Ascending aorta (tissue), 2 donors: ENCODE measurements at regions of chr5 and their contacts with region 1.

Region 1: DNA sequence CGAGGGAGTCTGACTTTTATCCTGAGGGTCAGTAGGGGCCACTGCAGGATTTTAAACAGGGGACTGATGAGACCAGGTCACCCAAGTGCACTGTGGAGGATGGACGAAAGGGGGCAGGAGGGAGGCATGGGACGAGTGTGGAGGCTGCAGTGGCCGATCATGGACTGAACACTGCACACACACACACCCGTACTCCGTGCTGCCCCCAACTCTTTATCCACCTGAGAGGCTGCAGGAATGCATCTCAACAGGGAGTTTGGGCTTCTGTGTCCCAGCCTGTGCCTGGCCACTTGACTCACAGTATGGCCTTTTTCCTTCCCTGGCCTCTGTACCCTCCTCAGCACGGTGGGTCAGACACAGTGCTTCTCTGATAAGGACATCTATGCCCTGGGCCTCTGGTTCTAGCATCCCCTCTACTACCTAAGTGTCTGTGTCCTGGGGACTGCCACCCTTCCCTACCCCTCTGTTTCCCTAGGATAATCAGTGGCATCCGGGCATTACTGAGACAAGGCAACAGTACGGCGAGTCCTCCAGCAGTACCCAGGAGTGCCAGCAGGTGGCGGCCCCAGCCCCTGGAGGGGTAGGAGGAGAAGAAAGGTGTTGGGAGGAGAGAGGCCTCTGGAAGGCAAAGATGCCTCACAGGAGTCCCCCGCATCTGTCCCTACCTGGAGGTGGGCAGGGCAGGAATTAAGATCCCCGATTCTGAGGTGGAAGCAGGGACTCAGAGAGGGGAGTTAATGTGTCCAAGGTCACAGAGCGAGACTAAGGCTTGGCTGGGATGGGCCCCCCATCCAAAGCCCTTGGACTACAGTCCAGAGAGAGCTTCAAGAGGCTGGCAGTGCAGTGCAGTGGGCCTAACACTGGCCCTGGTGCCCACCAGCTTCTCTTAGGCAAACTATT is 5.1 kb upstream of the CDX1 start:
- DNase-seq: peak in 1 of 2 donors; percentile 93
- H3K4me3 ChIP-seq: no peak overlapping the region
- H3K27ac ChIP-seq: peak overlapping the region; percentile 98 to 99
- H3K4me1 ChIP-seq: peaks cover 23 to 56% of the 10 kb centered on the region in 2 donors
- H3K27me3 ChIP-seq: no peaks in the 10 kb centered on the region
- CTCF ChIP-seq: peak; percentile 91 to 98 (median 96)

Region 2: GRCh38 chr5:150129813-150130492 is 31.5 kb before region 1 on chr5:
- intact Hi-C with region 1: loop called (anchors 2 kb)
- DNase-seq: peak in 1 of 2 donors; percentile 86
- H3K4me3 ChIP-seq: no peak overlapping the region
- H3K27ac ChIP-seq: peak overlapping the region; percentile 98 to 99
- H3K4me1 ChIP-seq: peaks cover 16 to 47% of the 10 kb centered on the region in 2 donors
- H3K27me3 ChIP-seq: no peaks in the 10 kb centered on the region
- CTCF ChIP-seq: peak; percentile 92 to 96 (median 95)

Region 3: GRCh38 chr5:150175076-150175935 is 13.8 kb after region 1 on chr5:
- intact Hi-C with region 1: loop called (anchors 1 kb)
- DNase-seq: no peak
- H3K4me3 ChIP-seq: no peak overlapping the region
- H3K27ac ChIP-seq: peak overlapping the region in 1 of 2 donors; percentile 95
- H3K4me1 ChIP-seq: peaks cover 11 to 33% of the 10 kb centered on the region in 2 donors
- H3K27me3 ChIP-seq: no peaks in the 10 kb centered on the region
- CTCF ChIP-seq: peak in 2 of 3 experiments; percentile 16 to 50

Region 4: GRCh38 chr5:150180241-150181026 is 18.9 kb after region 1 on chr5:
- intact Hi-C with region 1: loop called (anchors 1 kb)
- DNase-seq: peak; percentile 44 to 91
- H3K4me3 ChIP-seq: peak overlapping the region in 1 of 2 donors; percentile 21
- H3K27ac ChIP-seq: peak overlapping the region; percentile 95 to 96
- H3K4me1 ChIP-seq: peaks cover 17 to 45% of the 10 kb centered on the region in 2 donors
- H3K27me3 ChIP-seq: no peaks in the 10 kb centered on the region
- CTCF ChIP-seq: no peak

Region 5: DNA sequence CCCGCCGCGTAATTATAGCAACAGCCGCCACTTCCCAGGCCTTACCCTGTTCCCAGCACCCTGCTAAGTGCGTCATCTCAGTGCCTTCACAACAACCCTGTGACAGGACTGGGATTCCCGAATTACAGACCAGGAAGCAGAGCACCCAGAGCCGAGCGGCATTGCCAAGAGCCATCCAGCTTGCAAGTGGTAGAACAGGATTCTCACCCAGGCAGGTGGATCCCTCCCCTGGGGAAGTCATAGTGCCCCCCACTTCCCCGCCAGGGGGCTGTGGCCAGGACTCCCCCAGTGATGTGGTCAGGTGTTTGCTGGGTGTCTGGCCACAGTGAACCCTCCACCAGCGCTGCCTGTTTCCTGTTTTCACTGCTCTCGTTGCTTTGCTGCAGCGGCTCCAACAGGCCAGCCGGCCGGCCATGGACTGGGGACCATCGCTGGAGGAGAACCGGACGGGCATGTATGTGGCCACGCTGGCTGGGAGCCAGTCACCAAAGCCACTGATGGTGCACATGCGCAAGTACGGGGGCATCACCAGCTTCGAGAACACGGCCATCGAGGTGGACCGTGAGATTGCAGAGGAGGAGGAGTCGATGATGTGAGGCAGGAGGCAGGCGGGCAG is 47.6 kb after region 1 on chr5:
- intact Hi-C with region 1: no loop called
- DNase-seq: peak; percentile 37 to 84
- H3K4me3 ChIP-seq: peak overlapping the region in 1 of 2 donors; percentile 30
- H3K27ac ChIP-seq: peak overlapping the region in 1 of 2 donors; percentile 40
- H3K4me1 ChIP-seq: peaks cover 0 to 4% of the 10 kb centered on the region in 2 donors
- H3K27me3 ChIP-seq: no peaks in the 10 kb centered on the region
- CTCF ChIP-seq: no peak